ENCODE measurements at regions of chr19 and their contacts with region 1.

Region 1: GRCh38 chr19:3665681-3666544 is 34.4 kb downstream of the PIP5K1C start:
- DNase-seq: peak in 1 of 2 donors; percentile 50
- ATAC-seq: peak; percentile 19 to 57
- H3K4me3 ChIP-seq: no peak overlapping the region
- H3K27ac ChIP-seq: no peak overlapping the region
- H3K4me1 ChIP-seq: peaks cover 22 to 23% of the 10 kb centered on the region in 2 donors
- H3K27me3 ChIP-seq: no peaks in the 10 kb centered on the region
- CTCF ChIP-seq: peak; percentile 85 to 97 (median 97)
- POLR2A ChIP-seq: no peak

Region 2: DNA sequence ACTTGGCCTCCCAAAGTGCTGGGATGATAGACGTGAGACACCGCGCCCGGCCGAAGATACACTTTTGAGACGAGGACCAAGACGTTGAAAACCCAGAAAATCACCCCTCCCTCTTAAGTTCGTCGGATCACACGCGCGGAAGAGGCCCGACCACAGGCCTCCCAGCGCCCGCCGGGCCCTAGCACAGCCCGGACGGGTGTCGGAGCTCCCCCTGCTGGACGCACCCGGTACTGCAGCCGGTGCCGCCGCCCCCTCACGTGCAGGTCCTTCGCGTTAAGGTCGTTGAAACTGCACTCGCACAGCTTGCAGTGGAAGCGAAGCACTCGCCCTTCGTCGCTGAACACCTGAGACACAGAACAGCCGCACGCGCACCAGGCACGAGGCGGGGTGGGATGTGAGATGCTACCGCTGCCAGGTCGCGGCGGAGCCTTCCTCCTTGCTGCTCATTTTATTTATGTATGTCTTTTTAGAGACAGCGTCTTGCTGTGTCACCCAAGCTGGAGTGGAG is 156.0 kb after region 1 on chr19:
- in situ Hi-C with region 1: no loop called
- intact Hi-C with region 1: loop called (anchors 10 kb)
- DNase-seq: peak in 1 of 2 donors; percentile 28
- ATAC-seq: peak; percentile 41 to 50
- H3K4me3 ChIP-seq: no peak overlapping the region
- H3K27ac ChIP-seq: no peak overlapping the region
- H3K4me1 ChIP-seq: no peaks in the 10 kb centered on the region
- H3K27me3 ChIP-seq: peaks cover 4 to 12% (median 5%) of the 10 kb centered on the region in 3 donors
- CTCF ChIP-seq: peak; percentile 86 to 95 (median 92)
- POLR2A ChIP-seq: no peak